Activated CD8-positive, alpha-beta T cell treated with anti-CD3 and anti-CD28 coated beads for 36 hours (primary cell): ENCODE measurements at regions of chr22 and their contacts with region 1.

Region 1: GRCh38 chr22:25172153-25172552 is 27.5 kb upstream of the CRYBB3 start:
- DNase-seq: peak; percentile 66
- ATAC-seq: peak; percentile 84
- H3K4me3 Mint-ChIP-seq: no peak overlapping the region
- H3K27ac Mint-ChIP-seq: no peak overlapping the region
- H3K4me1 Mint-ChIP-seq: no peaks in the 10 kb centered on the region
- H3K27me3 Mint-ChIP-seq: no peaks in the 10 kb centered on the region
- CTCF ChIP-seq: peak; percentile 65

Region 2: GRCh38 chr22:25081409-25081824 is 90.7 kb before region 1 on chr22:
- CTCF ChIA-PET with region 1: interaction called, 34 read pairs
- POLR2A ChIA-PET with region 1: interaction called, 3 read pairs
- intact Hi-C with region 1: loop called (anchors 10 kb)
- DNase-seq: peak; percentile 79
- ATAC-seq: peak; percentile 19
- H3K4me3 Mint-ChIP-seq: no peak overlapping the region
- H3K27ac Mint-ChIP-seq: no peak overlapping the region
- H3K4me1 Mint-ChIP-seq: peaks cover 85% of the 10 kb centered on the region
- H3K27me3 Mint-ChIP-seq: no peaks in the 10 kb centered on the region
- CTCF ChIP-seq: peak; percentile 72